Activated CD4-positive, alpha-beta T cell treated with anti-CD3 and anti-CD28 coated beads for 36 hours (primary cell): ENCODE measurements at regions of chr9 and their contacts with region 1.

Region 1: DNA sequence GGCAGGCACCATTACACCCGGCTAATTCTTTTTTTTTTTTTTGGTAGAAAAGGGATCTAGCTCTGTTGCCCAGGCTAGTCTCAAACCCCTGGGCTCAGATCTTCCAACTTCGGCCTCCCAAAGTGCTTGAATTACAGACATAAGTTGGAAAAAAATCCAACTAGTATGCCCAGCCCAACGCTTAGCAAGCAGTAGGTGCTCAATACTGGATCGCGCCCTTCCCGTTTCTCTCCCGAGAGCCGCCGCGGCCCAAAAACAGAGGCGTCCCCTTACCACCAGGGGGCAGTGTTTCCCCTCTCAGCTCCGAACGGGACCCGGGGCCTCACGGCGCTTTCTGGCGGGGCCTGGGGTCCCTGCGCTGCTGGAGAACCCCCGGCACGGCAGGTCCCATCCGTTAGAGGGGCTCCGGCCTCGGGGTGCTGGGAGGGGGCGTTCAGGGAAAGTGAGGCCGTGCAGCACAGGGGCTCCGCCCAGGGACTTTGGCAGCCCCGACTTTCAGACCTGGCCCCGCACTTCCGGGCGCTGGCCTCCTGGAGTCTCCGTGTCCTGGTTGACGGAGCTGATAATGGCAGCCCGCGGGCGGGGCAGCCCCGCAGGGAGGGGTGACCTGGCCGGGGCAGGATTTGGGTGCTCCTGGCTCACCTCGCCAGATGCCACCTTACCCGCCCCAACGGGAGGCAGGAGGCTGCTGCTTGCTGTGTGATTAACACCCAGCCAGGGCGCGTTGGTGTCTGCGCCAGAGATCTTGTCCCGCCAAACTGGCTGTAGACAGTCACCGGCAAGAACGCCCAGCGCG is 15.2 kb downstream of the PTGES start:
- DNase-seq: peak; percentile 93
- ATAC-seq: peak; percentile 89
- H3K4me3 Mint-ChIP-seq: peak overlapping the region; percentile 55
- H3K27ac Mint-ChIP-seq: no peak overlapping the region
- H3K4me1 Mint-ChIP-seq: peaks cover 6% of the 10 kb centered on the region
- H3K27me3 Mint-ChIP-seq: no peaks in the 10 kb centered on the region

Region 2: GRCh38 chr9:128863647-128864046 is 874.0 kb before region 1 on chr9:
- CTCF ChIA-PET with region 1: no interaction called
- POLR2A ChIA-PET with region 1: no interaction called
- intact Hi-C with region 1: no loop called
- DNase-seq: peak; percentile 93
- ATAC-seq: peak; percentile 98
- H3K4me3 Mint-ChIP-seq: no peak overlapping the region
- H3K27ac Mint-ChIP-seq: no peak overlapping the region
- H3K4me1 Mint-ChIP-seq: peaks cover 5% of the 10 kb centered on the region
- H3K27me3 Mint-ChIP-seq: no peaks in the 10 kb centered on the region

Region 3: GRCh38 chr9:129749992-129750391 is 12.3 kb after region 1 on chr9:
- CTCF ChIA-PET with region 1: interaction called, 14 read pairs
- POLR2A ChIA-PET with region 1: no interaction called
- intact Hi-C with region 1: no loop called
- DNase-seq: no peak
- ATAC-seq: no peak
- H3K4me3 Mint-ChIP-seq: no peak overlapping the region
- H3K27ac Mint-ChIP-seq: no peak overlapping the region
- H3K4me1 Mint-ChIP-seq: peaks cover 11% of the 10 kb centered on the region
- H3K27me3 Mint-ChIP-seq: no peaks in the 10 kb centered on the region

Region 4: GRCh38 chr9:129776938-129777768 is 39.5 kb after region 1 on chr9:
- CTCF ChIA-PET with region 1: interaction called, 101 read pairs
- POLR2A ChIA-PET with region 1: no interaction called
- intact Hi-C with region 1: no loop called
- DNase-seq: peak; percentile 87
- ATAC-seq: peak; percentile 94
- H3K4me3 Mint-ChIP-seq: peak overlapping the region; percentile 30
- H3K27ac Mint-ChIP-seq: no peak overlapping the region
- H3K4me1 Mint-ChIP-seq: peaks cover 12% of the 10 kb centered on the region
- H3K27me3 Mint-ChIP-seq: no peaks in the 10 kb centered on the region